Tibial artery (tissue), 4 donors: ENCODE measurements at regions of chr16 and their contacts with region 1.

Region 1: DNA sequence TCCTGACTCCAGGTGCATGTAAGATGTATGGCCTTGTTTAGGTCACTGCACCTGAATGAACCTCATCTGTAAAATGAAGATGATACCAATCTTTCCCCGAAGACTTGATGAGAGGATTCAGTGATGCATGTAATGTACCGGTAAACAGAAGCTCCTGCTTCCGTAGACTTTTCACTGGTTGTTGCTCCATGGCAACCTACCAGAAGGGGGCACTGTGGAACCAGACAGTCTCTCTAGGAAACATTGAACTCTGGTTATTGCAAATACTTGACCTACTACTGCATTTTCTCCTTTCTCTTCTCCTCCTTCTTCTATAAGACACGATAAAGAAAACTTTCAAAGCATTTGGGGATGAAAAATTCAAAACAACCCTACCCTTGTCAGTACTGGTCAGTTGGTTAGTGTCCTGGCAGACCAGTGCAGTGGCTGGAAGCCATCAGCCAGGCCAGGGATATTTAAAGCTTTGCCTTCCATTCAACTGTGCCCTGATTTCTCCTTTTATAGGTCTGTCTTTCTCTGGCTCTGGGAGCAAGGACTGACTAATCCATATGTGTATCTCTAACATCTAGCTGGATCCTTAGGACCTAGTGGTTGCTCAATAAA is 667.4 kb upstream of the SALL1 start:
- DNase-seq: no peak
- H3K4me3 ChIP-seq: no peak overlapping the region
- H3K27ac ChIP-seq: no peak overlapping the region
- H3K4me1 ChIP-seq: peaks cover 0 to 4% (median 0%) of the 10 kb centered on the region in 4 donors
- H3K27me3 ChIP-seq: no peaks in the 10 kb centered on the region
- CTCF ChIP-seq: peak; percentile 28 to 31

Region 2: DNA sequence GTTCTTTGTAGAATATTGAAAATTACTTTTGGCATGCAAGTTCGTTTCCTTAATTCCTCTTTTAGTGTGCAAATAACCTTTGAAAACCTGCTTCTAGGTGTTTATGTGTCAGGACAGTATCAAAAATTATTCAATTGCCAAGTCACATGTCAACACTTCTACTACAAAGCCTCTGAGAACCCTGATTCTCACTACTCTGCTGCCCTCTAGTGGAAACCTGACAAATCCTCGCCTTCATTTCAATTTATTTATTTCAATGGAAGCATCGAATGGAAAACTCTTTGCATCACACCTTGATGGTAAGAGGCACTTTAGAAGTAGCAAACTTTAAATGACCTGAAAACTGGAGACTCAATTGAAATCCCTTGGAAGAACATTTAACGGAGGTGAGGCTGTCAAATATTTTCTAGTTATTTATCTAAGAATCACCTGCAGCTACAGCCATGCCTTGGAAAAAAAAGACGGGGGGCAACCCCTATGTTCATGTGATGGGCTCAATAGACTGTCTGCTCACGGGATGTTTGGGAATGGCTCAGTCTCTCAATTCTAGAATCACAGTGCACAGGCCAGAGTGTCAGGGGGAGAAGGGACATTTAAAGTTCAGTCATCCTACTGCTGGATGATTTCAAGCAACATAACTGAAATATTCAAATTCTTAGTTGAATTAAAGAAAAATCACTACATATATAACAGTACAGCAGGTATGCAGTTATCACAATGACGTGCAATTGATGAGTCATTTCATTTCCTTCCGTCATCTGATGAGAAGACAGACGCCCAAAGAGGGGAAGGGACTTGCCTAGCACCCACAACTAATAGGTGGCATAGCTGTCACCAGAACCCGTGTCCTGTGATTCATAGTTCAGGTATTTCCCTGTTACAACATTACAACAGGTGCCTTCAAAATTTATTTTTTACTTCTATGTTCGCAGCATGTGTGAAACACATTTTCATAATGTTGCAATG is 164.6 kb after region 1 on chr16:
- intact Hi-C with region 1: loop called (anchors 10 kb)
- DNase-seq: no peak
- H3K4me3 ChIP-seq: no peak overlapping the region
- H3K27ac ChIP-seq: no peak overlapping the region
- H3K4me1 ChIP-seq: no peaks in the 10 kb centered on the region
- H3K27me3 ChIP-seq: no peaks in the 10 kb centered on the region
- CTCF ChIP-seq: peak; percentile 56 to 70